A549 (cell line): ENCODE measurements at regions of chr9 and their contacts with region 1.

Region 1: DNA sequence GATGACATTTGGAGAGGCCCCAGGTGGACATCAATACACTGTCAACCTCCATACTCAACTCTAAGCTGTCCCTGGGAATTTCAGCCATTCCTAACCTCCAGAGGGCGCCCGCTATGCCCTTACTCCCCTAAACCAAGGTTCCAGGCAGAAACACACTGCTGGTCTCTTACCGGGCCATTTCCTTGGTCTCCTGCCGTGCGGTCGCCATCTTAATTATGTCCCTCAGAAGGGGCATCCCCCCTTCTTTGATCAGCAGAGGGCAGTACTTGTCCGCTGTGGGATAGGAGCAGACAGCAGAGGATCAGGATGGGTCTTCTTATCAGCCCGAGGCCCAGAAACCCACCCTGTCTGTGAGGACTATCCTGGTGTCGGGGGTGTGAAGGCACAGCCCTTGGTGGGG is 9.3 kb upstream of the ZDHHC12 start:
- DNase-seq: peak; percentile 96 to 97
- ATAC-seq: peak; percentile 98 to 99
- H3K4me3 ChIP-seq: no peak overlapping the region
- H3K27ac ChIP-seq: peak overlapping the region; percentile 41 to 73; a peak in 5 of 6 replicates
- H3K4me1 ChIP-seq: no peaks in the 10 kb centered on the region
- CTCF ChIP-seq: peak; percentile 94
- EP300 ChIP-seq: no peak
- POLR2A ChIP-seq: no peak
- RAD21 ChIP-seq: peak; percentile 83 to 88

Region 2: DNA sequence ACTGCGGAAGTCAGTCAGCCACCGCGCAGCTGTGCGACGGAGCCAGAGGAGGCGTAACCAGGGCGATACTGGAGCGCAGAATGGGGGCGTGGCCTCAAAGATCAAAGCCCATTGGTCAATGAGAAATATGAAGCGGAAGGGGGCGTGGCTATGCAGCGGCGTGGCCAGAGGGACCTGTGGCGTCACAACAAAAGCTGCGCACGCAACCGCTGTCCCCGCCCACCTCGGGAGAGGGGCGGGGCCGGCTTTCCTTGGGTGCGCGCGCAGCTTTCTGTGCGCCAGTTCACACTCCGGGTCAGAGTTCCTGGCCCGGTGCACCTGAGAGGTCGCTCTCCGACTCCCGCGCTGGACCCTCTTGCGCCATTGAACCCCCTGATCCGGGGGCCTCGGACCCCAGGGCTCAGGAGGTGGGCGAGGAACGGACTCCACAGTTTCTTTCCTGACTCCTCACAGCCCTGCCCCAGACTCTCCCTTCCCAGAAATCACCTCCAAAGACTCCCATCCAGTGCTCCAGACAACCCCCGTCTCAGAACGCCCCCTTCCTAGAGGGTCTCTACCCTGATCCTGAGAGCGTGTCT is 457.2 kb before region 1 on chr9 and contains the starts of genes GOLGA2 and SWI5:
- CTCF ChIA-PET with region 1: no interaction called
- POLR2A ChIA-PET with region 1: no interaction called
- DNase-seq: peak; percentile 97 to 99
- ATAC-seq: peak; percentile 91 to 97
- H3K4me3 ChIP-seq: peak within 1 kb of the TSS; percentile 95
- H3K27ac ChIP-seq: peak within 1 kb of the TSS; percentile 94
- H3K4me1 ChIP-seq: peaks cover 12% of the 10 kb centered on the region; the same call in 2 of the 3 replicates
- CTCF ChIP-seq: no peak
- EP300 ChIP-seq: no peak
- POLR2A ChIP-seq: peak; percentile 96
- RAD21 ChIP-seq: no peak
- polyA plus RNA-seq, gene GOLGA2: 55.3 and 61.9 TPM in 2 replicates
- polyA plus RNA-seq, gene SWI5: 66.8 and 67.6 TPM in 2 replicates

Region 3: GRCh38 chr9:128635283-128636023 is 97.8 kb before region 1 on chr9:
- CTCF ChIA-PET with region 1: interaction called, 11 read pairs
- POLR2A ChIA-PET with region 1: no interaction called
- DNase-seq: peak; percentile 93 to 98
- ATAC-seq: peak; percentile 86 to 93
- H3K4me3 ChIP-seq: peak overlapping the region; percentile 31
- H3K27ac ChIP-seq: peak overlapping the region; percentile 97 to 99
- H3K4me1 ChIP-seq: peaks cover 43% of the 10 kb centered on the region
- CTCF ChIP-seq: peak; percentile 74
- EP300 ChIP-seq: peak; percentile 26 to 54; a peak in 2 of 5 replicates
- POLR2A ChIP-seq: peak; percentile 10; the same call in 1 of the 2 replicates
- RAD21 ChIP-seq: peak; percentile 59 to 69

Region 4: DNA sequence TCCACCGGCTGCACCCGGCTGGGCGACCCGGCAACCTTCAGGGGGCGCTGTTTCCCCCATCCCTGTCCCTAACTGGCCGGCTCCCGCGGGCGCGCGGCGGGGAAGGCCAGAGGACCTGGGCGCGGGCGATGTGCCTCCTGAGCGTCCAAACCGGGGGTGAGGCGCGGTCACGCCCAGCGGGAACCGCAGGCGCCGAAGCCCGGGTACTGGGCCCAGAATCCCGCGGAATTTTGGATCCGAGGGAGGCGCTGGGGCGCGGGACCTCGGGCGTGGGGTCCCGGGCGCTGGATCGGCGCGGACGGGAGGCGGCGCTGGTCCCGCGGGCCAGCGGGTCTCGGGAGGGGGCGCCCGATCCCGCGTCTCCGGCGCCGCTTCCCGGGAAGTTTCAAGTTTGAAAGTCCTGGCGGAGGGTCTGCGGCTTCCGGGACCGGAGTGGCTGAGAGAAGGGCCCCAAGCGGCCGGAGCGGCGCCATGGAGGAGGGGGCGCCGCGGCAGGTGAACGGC is 30.8 kb before region 1 on chr9 and contains the start of gene PKN3:
- CTCF ChIA-PET with region 1: interaction called, 11 read pairs
- POLR2A ChIA-PET with region 1: interaction called, 10 read pairs
- DNase-seq: peak; percentile 89 to 98
- ATAC-seq: peak; percentile 83 to 89
- H3K4me3 ChIP-seq: peak within 1 kb of the TSS; percentile 94
- H3K27ac ChIP-seq: peak within 1 kb of the TSS; percentile 95 to 100
- H3K4me1 ChIP-seq: peaks cover 9% of the 10 kb centered on the region
- CTCF ChIP-seq: peak; percentile 99
- EP300 ChIP-seq: no peak
- POLR2A ChIP-seq: peak; percentile 25
- RAD21 ChIP-seq: peak; percentile 35 to 61; a peak in 4 of 5 replicates
- polyA plus RNA-seq, gene PKN3: 7.6 and 9.0 TPM in 2 replicates

Region 5: DNA sequence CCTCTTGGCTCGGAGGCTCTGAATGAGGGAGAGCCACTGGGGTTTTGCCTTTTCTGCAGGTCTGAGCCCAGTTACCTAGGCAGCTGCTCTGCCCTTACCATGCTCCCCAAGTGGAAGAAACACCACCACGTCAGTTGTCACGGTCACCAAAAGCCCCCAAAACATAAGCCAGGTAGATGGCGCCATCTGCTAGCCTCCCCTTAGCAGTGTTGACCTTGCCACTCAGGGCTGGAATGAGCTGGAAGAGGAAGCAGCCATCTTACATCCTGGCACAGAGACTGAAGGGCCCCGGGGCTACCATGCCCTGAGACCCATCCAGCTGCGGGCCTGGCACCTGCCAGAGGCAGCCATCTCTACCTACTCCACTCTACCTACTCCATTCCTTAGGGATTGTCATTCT is 31.1 kb after region 1 on chr9:
- CTCF ChIA-PET with region 1: interaction called, 14 read pairs
- POLR2A ChIA-PET with region 1: no interaction called
- DNase-seq: no peak
- ATAC-seq: peak in 1 of 2 experiments; percentile 59; a peak in 3 of 6 replicates
- H3K4me3 ChIP-seq: no peak overlapping the region
- H3K27ac ChIP-seq: no peak overlapping the region
- H3K4me1 ChIP-seq: peaks cover 12% of the 10 kb centered on the region; the same call in 2 of the 3 replicates
- CTCF ChIP-seq: no peak
- EP300 ChIP-seq: no peak
- POLR2A ChIP-seq: no peak
- RAD21 ChIP-seq: peak in 1 of 2 experiments; percentile 29; a peak in 1 of 5 replicates

Region 6: GRCh38 chr9:128809832-128810231 is 76.6 kb after region 1 on chr9:
- CTCF ChIA-PET with region 1: interaction called, 10 read pairs
- POLR2A ChIA-PET with region 1: no interaction called
- DNase-seq: no peak
- ATAC-seq: peak; percentile 33 to 39; a peak in 4 of 6 replicates
- H3K4me3 ChIP-seq: no peak overlapping the region
- H3K27ac ChIP-seq: no peak overlapping the region
- H3K4me1 ChIP-seq: no peaks in the 10 kb centered on the region
- CTCF ChIP-seq: no peak
- EP300 ChIP-seq: no peak
- POLR2A ChIP-seq: no peak
- RAD21 ChIP-seq: no peak